Ascending aorta (tissue), 2 donors: ENCODE measurements at regions of chr6 and their contacts with region 1.

Region 1: GRCh38 chr6:13711733-13712598 is at the start of gene RANBP9:
- DNase-seq: peak; percentile 54 to 93
- H3K4me3 ChIP-seq: peak within 1 kb of the TSS; percentile 91 to 95
- H3K27ac ChIP-seq: peak within 1 kb of the TSS; percentile 98 to 100
- H3K4me1 ChIP-seq: peaks cover 0 to 20% of the 10 kb centered on the region in 2 donors
- H3K27me3 ChIP-seq: no peaks in the 10 kb centered on the region
- CTCF ChIP-seq: peak in 2 of 3 experiments; percentile 0 to 6
- total RNA-seq, gene RANBP9: 26.3 TPM

Region 2: GRCh38 chr6:12137480-12137879 is 1574.5 kb before region 1 on chr6:
- intact Hi-C with region 1: no loop called
- DNase-seq: no peak
- H3K4me3 ChIP-seq: no peak overlapping the region
- H3K27ac ChIP-seq: no peak overlapping the region
- H3K4me1 ChIP-seq: no peaks in the 10 kb centered on the region
- H3K27me3 ChIP-seq: no peaks in the 10 kb centered on the region
- CTCF ChIP-seq: no peak

Region 3: DNA sequence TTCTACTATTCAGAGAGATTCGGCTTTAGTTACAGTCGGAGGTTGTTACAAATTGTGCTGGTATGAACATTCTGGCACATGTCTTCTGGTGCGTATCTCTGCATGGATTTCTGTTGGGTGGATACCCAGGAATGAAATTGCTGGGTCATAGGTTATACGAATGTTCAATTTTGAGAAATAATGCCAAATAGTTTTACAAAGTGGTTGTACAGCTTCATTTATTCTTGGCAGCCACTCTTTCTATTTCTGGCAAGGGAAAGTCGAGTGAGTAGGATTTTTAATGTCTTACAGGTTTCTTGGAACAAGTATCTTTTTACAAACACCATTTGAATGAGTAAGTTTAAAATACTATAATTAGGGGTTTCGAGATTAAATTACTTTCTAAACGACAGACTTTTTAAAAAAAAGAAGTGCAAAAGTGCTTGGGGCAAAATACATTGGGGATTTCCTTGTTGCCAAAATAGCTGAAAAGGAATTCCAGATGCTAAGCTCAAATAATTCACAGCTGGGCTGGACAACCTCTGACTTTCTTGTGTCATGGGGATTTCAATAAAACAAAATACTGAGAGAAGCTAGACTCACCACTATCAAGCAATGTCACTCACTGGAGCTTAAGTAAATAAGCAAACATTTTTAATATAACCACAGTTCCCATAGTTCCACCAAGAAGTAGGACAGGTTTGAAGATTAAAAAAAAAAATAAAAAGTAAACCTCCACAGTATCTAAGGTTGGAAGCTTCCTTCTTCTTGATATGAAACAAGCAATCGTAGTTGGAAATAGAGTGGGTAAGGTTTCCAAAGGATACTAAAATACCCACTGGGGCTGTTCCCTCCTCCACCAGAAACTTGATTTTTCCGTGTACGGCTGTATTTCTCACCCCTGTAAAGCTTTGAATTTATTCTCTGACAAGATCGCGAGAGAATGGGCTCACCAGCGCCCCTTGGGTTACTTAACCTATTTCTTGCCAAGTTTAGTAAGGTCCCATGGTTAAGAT is 203.0 kb before region 1 on chr6:
- intact Hi-C with region 1: no loop called
- DNase-seq: peak in 1 of 2 donors; percentile 56
- H3K4me3 ChIP-seq: no peak overlapping the region
- H3K27ac ChIP-seq: peak overlapping the region; percentile 1 to 67
- H3K4me1 ChIP-seq: peaks cover 0 to 10% of the 10 kb centered on the region in 2 donors
- H3K27me3 ChIP-seq: no peaks in the 10 kb centered on the region
- CTCF ChIP-seq: no peak

Region 4: GRCh38 chr6:13614926-13615798 is 96.8 kb before region 1 on chr6 and contains the start of gene NOL7:
- intact Hi-C with region 1: loop called (anchors 1 kb)
- DNase-seq: peak; percentile 84 to 98
- H3K4me3 ChIP-seq: peak within 1 kb of the TSS; percentile 82 to 97
- H3K27ac ChIP-seq: peak within 1 kb of the TSS; percentile 92 to 95
- H3K4me1 ChIP-seq: peaks cover 0 to 17% of the 10 kb centered on the region in 2 donors
- H3K27me3 ChIP-seq: no peaks in the 10 kb centered on the region
- CTCF ChIP-seq: peak; percentile 83 to 96 (median 87)
- total RNA-seq, gene NOL7: 32.2 TPM

Region 5: GRCh38 chr6:13641315-13641714 is 70.7 kb before region 1 on chr6:
- intact Hi-C with region 1: loop called (anchors 2 kb)
- DNase-seq: no peak
- H3K4me3 ChIP-seq: no peak overlapping the region
- H3K27ac ChIP-seq: peak overlapping the region; percentile 73 to 81
- H3K4me1 ChIP-seq: peaks cover 0 to 17% of the 10 kb centered on the region in 2 donors
- H3K27me3 ChIP-seq: no peaks in the 10 kb centered on the region
- CTCF ChIP-seq: no peak

Region 6: GRCh38 chr6:13760307-13761304 is 48.6 kb after region 1 on chr6:
- intact Hi-C with region 1: loop called (anchors 1 kb)
- DNase-seq: peak in 1 of 2 donors; percentile 84
- H3K4me3 ChIP-seq: no peak overlapping the region
- H3K27ac ChIP-seq: peak overlapping the region; percentile 66 to 83
- H3K4me1 ChIP-seq: peaks cover 9 to 38% of the 10 kb centered on the region in 2 donors
- H3K27me3 ChIP-seq: no peaks in the 10 kb centered on the region
- CTCF ChIP-seq: no peak

Region 7: DNA sequence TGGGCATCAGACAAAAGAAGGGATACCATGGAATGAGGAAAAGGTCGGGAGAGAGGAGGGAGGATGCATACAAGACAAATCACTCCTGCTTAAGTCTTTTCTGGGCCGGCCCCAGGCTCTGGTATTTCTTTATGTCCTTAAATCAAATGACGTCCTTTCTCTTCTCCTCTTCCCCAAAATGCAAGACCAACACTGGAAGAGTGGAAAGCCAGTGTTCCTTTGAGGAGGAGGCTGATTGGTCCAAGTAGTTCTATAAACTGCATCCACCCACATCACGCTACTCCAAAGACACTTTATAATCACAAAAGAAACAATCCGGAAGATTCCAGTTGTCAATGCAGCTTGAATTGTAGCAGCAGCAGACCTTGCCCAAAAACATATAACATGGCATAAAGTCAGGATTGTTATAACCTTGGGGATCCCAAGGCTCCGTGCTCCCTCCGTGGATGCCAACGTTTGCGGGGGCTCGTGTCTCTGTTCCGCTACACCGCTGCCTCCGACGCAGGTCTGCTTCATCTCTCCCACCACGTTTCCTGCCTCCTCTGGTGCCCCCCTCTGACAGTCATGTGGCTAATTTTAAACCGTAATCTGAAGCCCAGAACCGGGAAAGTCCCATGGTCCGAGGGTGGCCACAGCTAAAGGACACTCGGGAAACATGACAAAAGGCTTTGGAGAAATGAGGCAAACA is 55.3 kb after region 1 on chr6:
- intact Hi-C with region 1: loop called (anchors 1 kb)
- DNase-seq: peak in 1 of 2 donors; percentile 84
- H3K4me3 ChIP-seq: peak overlapping the region; percentile 20 to 54
- H3K27ac ChIP-seq: peak overlapping the region; percentile 15 to 16
- H3K4me1 ChIP-seq: peaks cover 0 to 25% of the 10 kb centered on the region in 2 donors
- H3K27me3 ChIP-seq: no peaks in the 10 kb centered on the region
- CTCF ChIP-seq: peak; percentile 9 to 41 (median 23)

Region 8: GRCh38 chr6:15200087-15200486 is 1488.1 kb after region 1 on chr6:
- intact Hi-C with region 1: no loop called
- DNase-seq: no peak
- H3K4me3 ChIP-seq: no peak overlapping the region
- H3K27ac ChIP-seq: no peak overlapping the region
- H3K4me1 ChIP-seq: no peaks in the 10 kb centered on the region
- H3K27me3 ChIP-seq: no peaks in the 10 kb centered on the region
- CTCF ChIP-seq: no peak